ENCODE measurements at regions of chr16 and their contacts with region 1.

Region 1: DNA sequence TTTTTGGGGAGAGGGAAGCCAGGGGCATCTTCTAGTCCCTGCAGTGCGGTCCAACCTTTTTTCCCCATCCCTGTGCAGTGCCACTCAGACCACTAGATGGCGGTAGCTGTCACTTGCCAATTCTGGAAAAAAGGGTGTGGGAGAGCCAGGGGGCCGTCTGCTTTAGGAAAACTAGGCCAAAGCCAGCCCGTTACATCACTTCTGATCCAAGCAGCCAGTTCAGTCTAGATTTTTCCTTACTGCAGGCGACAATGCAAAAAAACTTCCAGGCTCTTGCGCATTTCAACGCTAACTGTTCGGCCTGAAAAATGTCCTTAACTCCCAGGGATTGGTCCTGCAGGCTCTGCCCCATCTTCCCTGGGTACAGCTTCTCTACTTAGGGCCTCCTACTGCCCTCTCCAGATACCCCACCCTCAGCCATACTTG is 69.2 kb upstream of the CES5A start:
- DNase-seq: peak; percentile 56
- ATAC-seq: peak; percentile 49
- H3K4me3 Mint-ChIP-seq: no peak overlapping the region
- H3K27ac Mint-ChIP-seq: no peak overlapping the region
- H3K4me1 Mint-ChIP-seq: no peaks in the 10 kb centered on the region
- H3K27me3 Mint-ChIP-seq: peaks cover 43% of the 10 kb centered on the region
- CTCF ChIP-seq: peak; percentile 92

Region 2: DNA sequence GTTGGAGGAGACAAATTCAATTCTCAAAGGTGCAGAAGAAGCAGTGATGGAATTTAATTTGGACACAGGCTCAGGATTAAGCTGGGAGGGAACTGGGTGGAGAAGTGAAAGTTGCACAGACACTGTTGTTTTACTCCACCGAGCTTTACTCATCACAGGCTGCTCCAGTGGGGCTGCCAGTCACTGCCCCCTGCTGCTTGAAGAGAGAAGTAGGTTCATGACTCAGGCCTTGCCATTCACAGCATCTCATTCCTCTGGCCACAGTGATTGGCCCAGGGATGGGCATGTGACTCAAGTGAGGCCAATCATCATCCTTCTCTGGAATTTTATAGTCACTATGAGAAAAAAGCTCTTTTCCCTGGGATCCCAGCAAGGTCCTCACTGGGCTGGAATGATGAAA is 258.7 kb after region 1 on chr16:
- CTCF ChIA-PET with region 1: interaction called, 27 read pairs
- POLR2A ChIA-PET with region 1: no interaction called
- intact Hi-C with region 1: loop called (anchors 10 kb)
- DNase-seq: peak; percentile 76
- ATAC-seq: peak; percentile 81
- H3K4me3 Mint-ChIP-seq: no peak overlapping the region
- H3K27ac Mint-ChIP-seq: no peak overlapping the region
- H3K4me1 Mint-ChIP-seq: no peaks in the 10 kb centered on the region
- H3K27me3 Mint-ChIP-seq: peaks cover 5% of the 10 kb centered on the region
- CTCF ChIP-seq: peak; percentile 67

Measured in activated CD8-positive, alpha-beta T cell treated with anti-CD3 and anti-CD28 coated beads for 36 hours (primary cell).